K562 (cell line): ENCODE measurements at regions of chr1 and their contacts with region 1.

Region 1: GRCh38 chr1:161952607-161953172 is 71.0 kb downstream of the OLFML2B start:
- DNase-seq: no peak
- ATAC-seq: peak; percentile 43; the same call in 1 of the 3 replicates
- H3K4me3 ChIP-seq: no peak overlapping the region
- H3K27ac ChIP-seq: no peak overlapping the region
- H3K4me1 ChIP-seq: peaks cover 4 to 21% of the 10 kb centered on the region in 2 experiments; a peak in 4 of 5 replicates
- H3K27me3 ChIP-seq: no peaks in the 10 kb centered on the region
- CTCF ChIP-seq: no peak
- EP300 ChIP-seq: no peak
- POLR2A ChIP-seq: no peak
- RAD21 ChIP-seq: no peak

Region 2: DNA sequence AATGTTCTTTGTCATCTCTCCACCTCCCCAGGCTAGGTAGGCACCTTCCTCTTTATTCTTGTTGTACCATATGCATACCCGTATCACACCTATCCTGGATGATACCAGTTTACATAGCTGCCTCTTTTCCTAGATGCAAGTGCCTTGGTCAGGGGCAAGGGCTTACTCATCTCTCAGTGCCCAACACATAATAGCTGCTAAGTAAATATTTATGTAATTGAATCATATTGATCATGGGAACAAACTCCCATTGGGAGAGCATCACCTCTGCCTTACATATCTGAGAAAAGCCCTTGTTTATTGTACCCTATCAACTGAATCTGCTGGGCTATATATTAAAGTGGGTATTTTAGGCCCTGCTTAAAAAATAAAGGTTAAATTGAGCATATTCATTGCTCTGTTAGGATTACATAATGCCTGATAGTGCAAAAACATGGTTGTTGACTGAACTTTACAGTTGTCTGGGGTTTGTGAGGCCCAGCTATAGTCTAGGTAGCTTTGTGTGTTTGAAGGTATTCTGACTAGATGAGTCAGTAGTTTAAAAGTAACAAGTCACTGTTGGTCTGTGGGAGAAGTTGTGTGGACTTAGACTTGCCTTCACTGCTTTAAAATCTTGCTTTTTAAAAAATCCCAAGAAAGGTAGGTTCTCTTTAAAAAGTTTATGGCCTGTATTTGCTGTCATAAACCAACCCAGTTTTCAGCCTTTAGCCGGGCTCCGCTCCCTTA is 11.7 kb before region 1 on chr1:
- CTCF ChIA-PET with region 1: no interaction called
- POLR2A ChIA-PET with region 1: interaction called, 7 read pairs
- in situ Hi-C with region 1: no loop called
- intact Hi-C with region 1: loop called (anchors 1 kb)
- DNase-seq: no peak
- ATAC-seq: peak; percentile 36; the same call in 2 of the 3 replicates
- H3K4me3 ChIP-seq: no peak overlapping the region
- H3K27ac ChIP-seq: no peak overlapping the region
- H3K4me1 ChIP-seq: peaks cover 0 to 41% of the 10 kb centered on the region in 2 experiments; a peak in 2 of 5 replicates
- H3K27me3 ChIP-seq: no peaks in the 10 kb centered on the region
- CTCF ChIP-seq: no peak
- EP300 ChIP-seq: no peak
- POLR2A ChIP-seq: no peak
- RAD21 ChIP-seq: no peak